ENCODE measurements at regions of chr17 and their contacts with region 1.

Region 1: DNA sequence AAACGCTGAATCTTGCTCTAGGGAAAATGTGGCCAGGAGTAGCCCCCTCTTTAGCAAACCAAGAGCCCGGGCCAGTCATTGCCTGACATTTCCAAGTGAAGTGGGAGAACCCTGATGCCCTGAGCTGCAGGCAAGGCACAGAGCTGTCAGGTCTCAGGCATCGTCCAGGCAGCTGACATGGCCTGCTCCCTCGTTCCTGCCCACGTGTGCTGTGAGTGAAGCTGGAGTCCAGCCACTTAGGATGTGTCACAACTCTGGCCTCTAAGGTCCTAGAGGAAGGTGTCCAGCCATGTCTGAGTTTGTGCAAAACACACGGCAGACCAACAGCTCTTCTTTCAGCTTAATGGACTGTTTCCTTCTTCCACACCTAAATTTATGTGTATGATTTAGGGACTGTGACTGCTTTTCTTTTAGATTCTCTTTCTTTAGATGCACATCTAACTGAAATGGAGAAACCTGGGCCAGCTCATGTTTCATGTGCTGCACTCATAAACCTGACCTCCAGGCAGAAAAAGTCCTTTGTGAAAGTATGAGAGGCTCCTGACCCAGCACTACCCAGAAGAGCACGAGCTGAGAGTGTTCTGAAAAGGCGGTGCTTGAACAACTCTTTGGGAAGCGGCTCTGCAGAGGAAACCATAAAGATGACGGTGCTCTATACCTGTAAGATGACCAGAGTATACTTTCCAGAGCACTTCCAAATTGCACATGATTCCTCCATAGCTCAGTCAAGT is 14.8 kb upstream of the LIMD2 start:
- DNase-seq: no peak
- ATAC-seq: no peak
- H3K4me3 ChIP-seq: no peak overlapping the region
- H3K4me3 Mint-ChIP-seq: no peak overlapping the region
- H3K27ac ChIP-seq: no peak overlapping the region
- H3K27ac Mint-ChIP-seq: peak overlapping the region in 1 of 2 donors; percentile 34
- H3K4me1 ChIP-seq: peaks cover 5 to 12% of the 10 kb centered on the region in 2 experiments
- H3K4me1 Mint-ChIP-seq: peaks cover 10 to 18% (median 14%) of the 10 kb centered on the region in 3 donors
- H3K27me3 ChIP-seq: no peaks in the 10 kb centered on the region
- H3K27me3 Mint-ChIP-seq: no peaks in the 10 kb centered on the region

Region 2: DNA sequence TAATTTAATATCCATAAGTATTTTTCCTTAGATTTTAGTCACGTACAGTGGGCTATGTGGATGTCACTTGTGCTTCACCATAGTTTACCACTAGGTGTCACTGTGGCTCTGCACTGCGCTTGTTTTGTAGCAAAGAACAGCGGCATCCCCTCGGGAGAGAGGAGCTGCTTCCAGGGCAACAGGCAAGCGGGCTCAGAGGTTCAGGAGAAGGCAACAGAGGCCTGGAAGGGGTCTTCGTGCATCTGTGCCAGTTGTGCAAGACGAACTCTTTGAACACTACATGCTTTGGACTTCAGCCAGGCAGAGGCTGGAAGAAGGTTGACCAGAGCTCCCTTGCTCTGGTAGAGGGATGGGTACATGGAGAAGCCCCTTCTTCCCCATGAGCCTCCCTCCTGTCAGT is 289.2 kb before region 1 on chr17:
- CTCF ChIA-PET with region 1: interaction called, 6 to 12 read pairs
- POLR2A ChIA-PET with region 1: no interaction called
- DNase-seq: peak; percentile 28 to 88 (median 55)
- ATAC-seq: peak; percentile 68 to 80 (median 71)
- H3K4me3 ChIP-seq: no peak overlapping the region
- H3K4me3 Mint-ChIP-seq: no peak overlapping the region
- H3K27ac ChIP-seq: no peak overlapping the region
- H3K27ac Mint-ChIP-seq: no peak overlapping the region
- H3K4me1 ChIP-seq: peaks cover 14 to 46% of the 10 kb centered on the region in 2 experiments
- H3K4me1 Mint-ChIP-seq: peaks cover 31 to 46% (median 35%) of the 10 kb centered on the region in 3 donors
- H3K27me3 ChIP-seq: no peaks in the 10 kb centered on the region
- H3K27me3 Mint-ChIP-seq: no peaks in the 10 kb centered on the region

Region 3: DNA sequence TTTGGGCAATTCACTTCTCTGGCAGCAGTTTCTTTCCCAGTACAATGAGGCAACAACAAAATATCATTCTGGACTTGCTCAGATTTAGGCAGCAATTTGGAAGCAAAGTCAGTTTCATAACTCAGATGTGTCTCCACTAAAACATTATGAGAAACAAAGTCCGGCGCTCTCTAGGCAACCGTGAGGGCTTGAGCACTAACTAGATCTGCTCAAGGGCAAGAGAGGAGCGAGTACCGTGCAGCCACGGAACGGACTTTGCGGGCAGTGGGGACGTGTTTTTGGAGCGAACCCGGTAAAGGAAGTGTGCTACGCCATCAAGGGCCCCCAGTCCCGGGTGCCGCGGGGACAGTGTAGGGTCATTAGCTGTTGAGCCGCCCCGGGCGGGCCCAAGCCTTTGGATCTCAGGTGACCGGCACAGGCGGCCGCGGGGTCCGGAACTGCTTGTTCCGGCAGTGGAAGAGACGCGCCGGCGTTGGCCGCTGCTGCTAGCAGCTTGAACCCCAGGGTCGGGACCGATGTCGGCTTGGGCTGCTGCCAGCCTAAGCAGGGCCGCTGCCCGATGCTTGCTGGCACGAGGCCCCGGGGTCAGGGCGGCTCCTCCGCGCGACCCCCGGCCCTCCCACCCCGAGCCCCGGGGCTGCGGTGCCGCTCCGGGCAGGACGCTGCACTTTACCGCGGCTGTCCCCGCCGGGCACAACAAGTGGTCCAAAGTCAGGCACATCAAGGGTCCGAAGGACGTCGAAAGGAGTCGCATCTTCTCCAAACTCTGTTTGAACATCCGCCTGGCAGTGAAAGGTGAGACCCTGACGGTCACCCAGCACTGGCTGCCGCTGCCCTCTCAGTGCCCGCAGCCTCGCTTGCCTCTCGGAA is 113.9 kb before region 1 on chr17 and contains the start of gene TACO1:
- CTCF ChIA-PET with region 1: no interaction called
- POLR2A ChIA-PET with region 1: no interaction called
- DNase-seq: peak in 34 of 35 experiments; percentile 41 to 82 (median 66)
- ATAC-seq: peak; percentile 88 to 92 (median 89)
- H3K4me3 ChIP-seq: peak within 1 kb of the TSS; percentile 68 to 96
- H3K4me3 Mint-ChIP-seq: peak within 1 kb of the TSS; percentile 89 to 96 (median 91)
- H3K27ac ChIP-seq: peak within 1 kb of the TSS; percentile 43
- H3K27ac Mint-ChIP-seq: peak within 1 kb of the TSS; percentile 95 to 96
- H3K4me1 ChIP-seq: peaks cover 14 to 41% of the 10 kb centered on the region in 2 experiments
- H3K4me1 Mint-ChIP-seq: peaks cover 35 to 51% (median 44%) of the 10 kb centered on the region in 3 donors
- H3K27me3 ChIP-seq: no peaks in the 10 kb centered on the region
- H3K27me3 Mint-ChIP-seq: no peaks in the 10 kb centered on the region
- total RNA-seq, gene TACO1: 10.9 to 20.5 (median 18.8) TPM

Region 4: DNA sequence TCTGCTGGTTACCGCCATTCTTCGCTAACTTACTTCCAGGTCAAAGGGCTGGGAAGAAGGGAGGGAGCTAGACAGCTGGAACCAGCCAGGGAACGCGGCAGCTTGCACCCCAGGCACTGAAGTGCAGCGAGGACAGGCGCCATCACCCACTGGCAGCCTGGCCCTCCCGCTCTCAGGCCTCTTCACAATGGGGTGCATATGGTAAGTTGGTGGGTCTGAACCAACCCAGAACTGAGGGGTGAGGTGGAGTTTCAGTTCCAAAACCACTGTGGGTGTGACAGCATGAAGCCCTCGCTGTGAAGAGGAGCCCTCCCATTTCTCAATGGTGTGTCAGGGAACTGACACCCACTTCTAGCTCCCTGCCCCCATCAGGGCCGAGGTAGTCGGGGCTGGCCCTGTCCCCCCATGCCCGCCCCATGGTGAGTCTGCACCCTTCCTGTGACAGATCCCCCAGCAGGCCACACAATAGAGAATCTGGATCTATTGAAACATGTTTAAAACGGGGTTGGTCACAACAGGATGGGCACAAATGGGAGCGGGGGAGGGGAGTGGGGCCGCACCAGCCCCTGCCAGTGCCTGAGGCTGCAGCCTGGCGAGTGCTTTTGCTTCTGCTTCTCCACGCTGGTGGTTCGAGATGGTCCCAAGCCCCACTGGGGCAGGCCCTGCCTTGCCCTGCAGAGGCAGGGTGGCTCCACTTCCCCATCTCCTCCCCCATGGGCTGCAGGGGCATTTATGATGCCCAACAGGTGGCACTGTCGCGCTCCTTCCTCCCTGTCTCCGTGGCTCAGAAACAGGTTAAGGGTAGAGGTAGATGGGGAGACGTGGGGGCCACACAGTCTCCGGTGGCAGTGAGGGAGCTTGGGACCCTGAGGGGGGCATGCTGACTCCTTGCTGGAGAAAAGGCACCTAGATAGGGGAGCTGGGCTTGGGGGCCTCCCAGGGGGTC is 17.1 kb before region 1 on chr17:
- CTCF ChIA-PET with region 1: interaction called, 66 to 70 read pairs
- POLR2A ChIA-PET with region 1: interaction called, 5 to 41 read pairs
- DNase-seq: peak; percentile 73 to 93 (median 86)
- ATAC-seq: peak; percentile 10 to 28 (median 10)
- H3K4me3 ChIP-seq: peak overlapping the region; percentile 64 to 98
- H3K4me3 Mint-ChIP-seq: peak overlapping the region; percentile 95 to 98 (median 96)
- H3K27ac ChIP-seq: peak overlapping the region; percentile 86
- H3K27ac Mint-ChIP-seq: peak overlapping the region; percentile 95 to 99
- H3K4me1 ChIP-seq: peaks cover 37 to 77% of the 10 kb centered on the region in 2 experiments
- H3K4me1 Mint-ChIP-seq: peaks cover 60 to 72% (median 69%) of the 10 kb centered on the region in 3 donors
- H3K27me3 ChIP-seq: no peaks in the 10 kb centered on the region
- H3K27me3 Mint-ChIP-seq: no peaks in the 10 kb centered on the region